Caco-2 (cell line): ENCODE measurements at regions of chr4 and their contacts with region 1.

Region 1: DNA sequence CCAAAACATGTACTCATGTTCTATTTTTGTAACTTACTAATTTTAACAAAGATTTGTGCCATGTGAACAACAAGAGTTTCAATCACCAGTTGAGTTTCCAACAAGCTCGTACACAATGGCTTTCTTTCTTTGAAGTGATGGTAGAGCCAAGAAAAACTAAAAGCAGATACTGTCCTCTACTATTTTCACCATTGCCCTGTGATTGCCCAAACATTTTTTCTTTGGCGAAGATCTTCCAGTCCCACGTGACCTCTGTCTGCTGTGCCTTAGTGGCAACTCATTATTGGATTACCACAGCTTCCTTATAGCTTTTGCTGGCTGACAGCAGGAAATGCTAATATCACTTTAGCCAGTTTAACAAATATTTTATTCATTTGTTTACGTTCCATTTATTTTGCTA is 1147.1 kb downstream of the STIM2 start:
- DNase-seq: no peak
- H3K4me3 ChIP-seq: no peak overlapping the region
- H3K4me3 Mint-ChIP-seq: no peak overlapping the region
- H3K27ac Mint-ChIP-seq: no peak overlapping the region
- H3K4me1 ChIP-seq: no peaks in the 10 kb centered on the region
- H3K4me1 Mint-ChIP-seq: no peaks in the 10 kb centered on the region
- H3K27me3 ChIP-seq: no peaks in the 10 kb centered on the region
- H3K27me3 Mint-ChIP-seq: peaks cover 2% of the 10 kb centered on the region
- CTCF ChIP-seq: no peak

Region 2: DNA sequence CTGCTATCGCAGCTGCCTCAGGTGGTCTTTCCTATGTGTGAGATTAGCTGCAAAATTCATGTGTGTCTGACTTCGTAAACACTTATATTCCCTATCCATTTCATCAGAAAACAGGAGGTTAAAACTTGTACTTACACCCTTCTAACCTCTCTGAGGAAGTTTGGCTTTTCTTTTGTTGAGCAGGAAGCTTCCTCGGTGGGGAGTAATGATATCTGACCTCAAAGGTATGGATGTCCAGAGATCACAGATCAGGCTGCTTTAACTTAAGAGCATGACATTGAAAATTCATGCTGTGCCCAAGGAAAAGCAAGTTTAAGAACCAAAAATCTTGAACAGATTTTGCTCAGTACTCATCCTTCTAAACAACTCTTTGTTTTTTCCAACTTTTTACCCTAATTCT is 718.0 kb before region 1 on chr4:
- CTCF ChIA-PET with region 1: interaction called, 11 read pairs
- POLR2A ChIA-PET with region 1: no interaction called
- intact Hi-C with region 1: no loop called
- DNase-seq: no peak
- H3K4me3 ChIP-seq: no peak overlapping the region
- H3K4me3 Mint-ChIP-seq: no peak overlapping the region
- H3K27ac Mint-ChIP-seq: no peak overlapping the region
- H3K4me1 ChIP-seq: no peaks in the 10 kb centered on the region
- H3K4me1 Mint-ChIP-seq: no peaks in the 10 kb centered on the region
- H3K27me3 ChIP-seq: no peaks in the 10 kb centered on the region; the same call in 1 of the 2 replicates
- H3K27me3 Mint-ChIP-seq: peaks cover 14% of the 10 kb centered on the region
- CTCF ChIP-seq: no peak